Posterior vena cava (tissue), 2 donors: ENCODE measurements at regions of chr1 and their contacts with region 1.

Region 1: GRCh38 chr1:27192039-27192529 is 37.2 kb upstream of the SLC9A1 start:
- DNase-seq: no peak

Region 2: DNA sequence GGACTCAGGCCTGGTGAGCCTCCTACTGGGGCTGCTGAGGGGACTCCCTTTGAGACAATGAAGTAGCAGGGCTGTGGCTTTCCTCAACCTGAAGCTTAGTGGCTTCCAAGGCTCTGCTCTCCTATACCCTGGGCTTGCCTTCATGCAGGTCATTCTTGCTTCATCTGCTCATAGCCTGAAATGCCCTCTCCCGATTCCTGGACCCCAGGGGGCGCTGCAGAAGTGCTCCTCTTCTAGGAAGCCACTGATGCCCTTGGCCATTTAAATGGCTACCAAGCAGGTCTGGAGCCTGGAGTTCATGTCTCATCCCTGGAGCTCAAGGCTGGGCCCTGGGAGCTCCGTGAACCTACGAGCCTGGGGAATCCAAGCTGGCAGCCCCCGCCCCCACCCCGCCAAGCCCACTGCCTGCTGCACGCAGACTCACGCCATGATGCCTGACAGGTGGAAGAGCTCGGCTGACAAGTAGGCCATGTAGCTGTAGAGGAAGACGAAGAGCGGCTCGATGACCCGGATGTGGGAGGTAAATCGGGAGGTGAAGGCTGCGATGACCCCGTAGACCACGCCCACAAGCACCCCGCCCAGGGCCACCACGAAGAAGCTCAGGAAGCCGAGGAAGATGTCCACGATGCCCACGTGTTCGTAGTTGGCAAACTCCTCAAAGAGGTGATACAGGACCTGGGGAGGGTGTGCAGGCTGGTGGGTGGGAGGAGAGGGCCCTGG is 82.8 kb before region 1 on chr1:
- intact Hi-C with region 1: loop called (anchors 5 kb)
- DNase-seq: no peak

Region 3: GRCh38 chr1:27241677-27242076 is 49.6 kb after region 1 on chr1:
- intact Hi-C with region 1: no loop called
- DNase-seq: no peak